Left ventricle myocardium inferior (tissue), 1 donor: ENCODE measurements at regions of chr2 and their contacts with region 1.

Region 1: GRCh38 chr2:85475799-85476490 is 57.4 kb downstream of the SH2D6 start:
- DNase-seq: no peak
- H3K4me3 ChIP-seq: no peak overlapping the region
- H3K27ac ChIP-seq: peak overlapping the region; percentile 43
- H3K4me1 ChIP-seq: peaks cover 17% of the 10 kb centered on the region
- H3K27me3 ChIP-seq: no peaks in the 10 kb centered on the region
- CTCF ChIP-seq: no peak

Region 2: GRCh38 chr2:85367180-85367579 is 108.8 kb before region 1 on chr2:
- intact Hi-C with region 1: no loop called
- DNase-seq: no peak
- H3K4me3 ChIP-seq: no peak overlapping the region
- H3K27ac ChIP-seq: no peak overlapping the region
- H3K4me1 ChIP-seq: no peaks in the 10 kb centered on the region
- H3K27me3 ChIP-seq: no peaks in the 10 kb centered on the region
- CTCF ChIP-seq: no peak

Region 3: GRCh38 chr2:85504778-85505323 is 28.9 kb after region 1 on chr2:
- intact Hi-C with region 1: loop called (anchors 2 kb)
- DNase-seq: peak; percentile 33
- H3K4me3 ChIP-seq: no peak overlapping the region
- H3K27ac ChIP-seq: peak overlapping the region; percentile 68
- H3K4me1 ChIP-seq: peaks cover 62% of the 10 kb centered on the region
- H3K27me3 ChIP-seq: no peaks in the 10 kb centered on the region
- CTCF ChIP-seq: no peak

Region 4: DNA sequence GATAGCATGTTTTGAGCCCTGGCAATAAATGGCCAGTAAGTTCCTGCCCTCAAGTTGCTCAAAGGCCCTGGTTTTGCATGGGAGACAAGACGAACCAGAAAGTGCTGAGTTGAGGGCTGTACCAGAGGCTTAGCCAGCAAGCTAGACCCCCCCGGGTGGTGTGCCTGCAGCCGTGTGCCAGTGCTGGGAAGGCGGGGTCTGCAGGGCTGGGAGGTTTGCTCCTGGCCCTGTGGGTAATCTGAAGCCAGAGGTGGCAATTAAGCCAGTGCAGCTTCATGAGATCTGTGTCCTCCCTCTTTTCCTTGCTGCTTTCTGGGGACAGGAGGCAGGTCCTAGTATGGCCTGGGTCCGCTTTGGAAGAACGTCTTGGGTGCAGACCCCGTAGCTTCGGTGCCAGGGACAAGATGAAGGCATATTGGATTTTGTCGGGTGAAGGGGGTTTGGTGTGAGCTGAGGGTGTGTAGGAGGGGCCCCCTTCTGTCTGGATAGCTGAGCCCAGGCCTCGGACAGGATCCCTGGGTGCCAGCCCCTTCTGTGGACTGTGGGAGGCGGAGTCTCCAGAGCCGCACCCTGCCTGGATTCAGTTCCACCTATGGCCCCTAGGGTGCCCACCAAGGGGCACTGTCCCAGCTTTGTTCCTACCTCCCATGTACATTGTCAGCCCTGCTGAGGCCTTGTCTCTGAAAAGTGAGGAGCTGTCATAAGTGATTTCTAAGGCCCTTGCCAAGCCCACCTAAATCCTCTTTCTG is 293.5 kb after region 1 on chr2:
- intact Hi-C with region 1: no loop called
- DNase-seq: no peak
- H3K4me3 ChIP-seq: peak overlapping the region; percentile 30
- H3K27ac ChIP-seq: peak overlapping the region; percentile 95
- H3K4me1 ChIP-seq: peaks cover 96% of the 10 kb centered on the region
- H3K27me3 ChIP-seq: no peaks in the 10 kb centered on the region
- CTCF ChIP-seq: peak; percentile 49